Calu3 (cell line): ENCODE measurements at regions of chr20 and their contacts with region 1.

Region 1: DNA sequence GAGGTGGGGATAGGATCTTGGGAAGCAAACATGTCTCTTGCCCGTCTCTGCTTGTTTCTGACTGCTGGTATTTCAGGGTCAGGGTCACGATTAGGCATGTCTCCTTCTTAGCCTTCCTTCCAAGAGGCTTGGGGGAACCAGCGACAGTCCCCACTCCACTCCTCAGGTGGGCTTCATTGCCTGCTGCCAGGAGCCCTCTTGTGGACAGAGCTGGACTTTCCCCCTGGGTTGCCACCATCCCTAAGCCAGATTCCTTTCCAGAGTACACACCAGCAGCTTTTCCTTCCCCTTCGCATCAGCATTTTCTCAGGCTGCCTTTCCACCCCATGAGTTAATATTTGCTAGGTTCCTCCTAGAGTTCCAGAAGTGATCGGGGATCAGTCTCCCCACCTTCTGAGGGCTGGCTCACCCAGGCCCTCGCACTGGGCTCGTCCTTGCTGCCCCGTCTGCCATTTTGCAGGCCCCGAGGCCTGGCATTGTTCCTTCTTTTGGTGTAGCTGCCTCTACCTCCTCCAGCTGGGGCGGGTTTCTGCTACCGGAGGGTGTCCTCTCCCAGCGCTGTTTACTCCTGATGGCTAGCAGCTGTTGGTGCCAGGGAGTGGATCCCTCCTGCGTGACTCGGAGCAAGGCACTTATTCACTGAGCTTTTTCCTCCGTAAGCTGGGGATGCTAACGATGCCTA is 8.8 kb upstream of the C20orf144 start:
- DNase-seq: peak; percentile 84
- H3K4me3 Mint-ChIP-seq: peak overlapping the region; percentile 55
- H3K27ac Mint-ChIP-seq: peak overlapping the region; percentile 71
- H3K4me1 Mint-ChIP-seq: peaks cover 53% of the 10 kb centered on the region
- H3K27me3 Mint-ChIP-seq: no peaks in the 10 kb centered on the region
- CTCF ChIP-seq: peak; percentile 96

Region 2: DNA sequence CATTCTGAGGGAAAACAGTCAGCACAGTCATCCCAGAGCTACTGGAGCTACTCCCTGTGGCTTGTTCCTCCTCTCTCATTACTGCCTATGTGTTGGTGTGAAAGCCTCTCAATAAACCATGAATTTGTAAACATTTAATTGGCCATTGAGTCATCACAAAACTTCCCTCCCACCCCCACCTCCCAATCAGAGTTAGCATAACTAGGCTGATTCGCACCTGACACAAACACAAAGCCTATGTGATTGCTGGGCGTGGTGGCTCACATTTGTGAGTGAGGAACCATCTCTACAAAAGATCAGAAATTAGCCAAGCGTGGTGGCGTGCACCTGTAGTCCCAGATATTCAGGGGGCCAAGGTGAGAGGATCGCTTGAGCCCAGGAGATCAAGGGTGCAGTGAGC is 192.6 kb before region 1 on chr20:
- CTCF ChIA-PET with region 1: interaction called, 17 read pairs
- intact Hi-C with region 1: loop called (anchors 5 kb)
- DNase-seq: no peak
- H3K4me3 Mint-ChIP-seq: no peak overlapping the region
- H3K27ac Mint-ChIP-seq: no peak overlapping the region
- H3K4me1 Mint-ChIP-seq: peaks cover 8% of the 10 kb centered on the region
- H3K27me3 Mint-ChIP-seq: no peaks in the 10 kb centered on the region
- CTCF ChIP-seq: no peak

Region 3: GRCh38 chr20:33515569-33516216 is 137.7 kb before region 1 on chr20:
- CTCF ChIA-PET with region 1: interaction called, 4 read pairs
- intact Hi-C with region 1: loop called (anchors 5 kb)
- DNase-seq: peak; percentile 14
- H3K4me3 Mint-ChIP-seq: no peak overlapping the region
- H3K27ac Mint-ChIP-seq: no peak overlapping the region
- H3K4me1 Mint-ChIP-seq: peaks cover 31% of the 10 kb centered on the region
- H3K27me3 Mint-ChIP-seq: no peaks in the 10 kb centered on the region
- CTCF ChIP-seq: peak; percentile 47

Region 4: DNA sequence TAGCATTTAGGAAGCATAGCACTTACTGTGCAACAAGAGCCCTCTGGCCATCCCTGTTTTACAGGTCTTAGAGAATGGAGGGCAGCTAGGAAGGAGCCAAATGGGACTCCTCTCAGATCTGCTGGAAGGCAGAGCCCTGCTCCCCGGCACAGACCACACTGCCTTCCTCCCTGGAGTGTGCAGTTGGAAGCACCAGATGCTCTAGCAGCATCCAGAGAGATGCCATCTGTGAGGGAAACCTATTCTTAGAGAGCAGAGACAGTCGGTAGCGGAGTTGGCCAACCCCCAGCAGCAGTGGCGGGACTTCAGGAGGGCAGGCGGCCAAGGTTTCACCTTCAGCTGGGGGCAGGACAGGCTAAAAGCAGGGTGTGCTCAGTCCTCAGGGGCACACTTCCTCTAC is 49.5 kb after region 1 on chr20:
- CTCF ChIA-PET with region 1: no interaction called
- intact Hi-C with region 1: no loop called
- DNase-seq: no peak
- H3K4me3 Mint-ChIP-seq: no peak overlapping the region
- H3K27ac Mint-ChIP-seq: no peak overlapping the region
- H3K4me1 Mint-ChIP-seq: no peaks in the 10 kb centered on the region
- H3K27me3 Mint-ChIP-seq: no peaks in the 10 kb centered on the region
- CTCF ChIP-seq: no peak

Region 5: GRCh38 chr20:33859157-33859695 is 205.9 kb after region 1 on chr20:
- CTCF ChIA-PET with region 1: no interaction called
- intact Hi-C with region 1: no loop called
- DNase-seq: no peak
- H3K4me3 Mint-ChIP-seq: no peak overlapping the region
- H3K27ac Mint-ChIP-seq: no peak overlapping the region
- H3K4me1 Mint-ChIP-seq: peaks cover 17% of the 10 kb centered on the region
- H3K27me3 Mint-ChIP-seq: no peaks in the 10 kb centered on the region
- CTCF ChIP-seq: no peak

Region 6: DNA sequence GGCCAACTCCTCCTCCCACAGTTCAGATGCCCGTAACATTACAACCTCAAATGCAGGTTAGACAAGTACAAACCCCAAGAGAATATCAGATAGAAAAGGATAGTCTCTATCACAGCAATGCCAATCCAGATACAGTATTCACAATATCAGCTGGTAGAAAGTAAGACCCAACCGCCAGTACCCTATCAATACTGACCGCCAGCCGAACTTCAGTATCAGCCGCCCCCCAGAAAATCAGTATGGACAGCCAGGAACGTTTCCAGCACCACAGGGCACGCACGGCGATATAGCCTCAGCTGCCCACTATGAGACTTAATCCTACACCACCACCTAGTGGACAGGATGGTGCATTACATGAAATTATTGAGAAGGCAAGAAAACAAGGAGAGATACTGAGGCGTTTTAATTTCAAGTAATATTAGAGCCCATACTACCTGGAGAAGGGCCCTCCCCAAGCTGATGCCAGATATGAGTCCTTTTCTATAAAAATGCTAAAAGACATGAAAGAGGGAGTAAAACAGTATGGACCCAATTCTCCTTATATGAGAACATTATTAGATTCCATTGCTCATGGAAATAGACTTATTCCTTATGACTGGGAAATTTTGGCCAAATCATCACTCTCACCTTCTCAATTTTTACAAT is 476.3 kb after region 1 on chr20:
- CTCF ChIA-PET with region 1: no interaction called
- intact Hi-C with region 1: no loop called
- DNase-seq: peak; percentile 84
- H3K4me3 Mint-ChIP-seq: peak overlapping the region; percentile 15
- H3K27ac Mint-ChIP-seq: peak overlapping the region; percentile 6
- H3K4me1 Mint-ChIP-seq: peaks cover 18% of the 10 kb centered on the region
- H3K27me3 Mint-ChIP-seq: peaks cover 17% of the 10 kb centered on the region
- CTCF ChIP-seq: peak; percentile 95